PC-9 (cell line): ENCODE measurements at regions of chrX and their contacts with region 1.

Region 1: GRCh38 chrX:4547213-4547836 is 833.9 kb upstream of the PRKX start:
- DNase-seq: peak in 1 of 2 experiments; percentile 35
- H3K4me3 ChIP-seq: no peak overlapping the region
- H3K27ac ChIP-seq: no peak overlapping the region
- H3K4me1 ChIP-seq: no peaks in the 10 kb centered on the region; the same call in 1 of the 2 replicates
- H3K27me3 ChIP-seq: no peaks in the 10 kb centered on the region
- CTCF ChIP-seq: peak; percentile 95

Region 2: DNA sequence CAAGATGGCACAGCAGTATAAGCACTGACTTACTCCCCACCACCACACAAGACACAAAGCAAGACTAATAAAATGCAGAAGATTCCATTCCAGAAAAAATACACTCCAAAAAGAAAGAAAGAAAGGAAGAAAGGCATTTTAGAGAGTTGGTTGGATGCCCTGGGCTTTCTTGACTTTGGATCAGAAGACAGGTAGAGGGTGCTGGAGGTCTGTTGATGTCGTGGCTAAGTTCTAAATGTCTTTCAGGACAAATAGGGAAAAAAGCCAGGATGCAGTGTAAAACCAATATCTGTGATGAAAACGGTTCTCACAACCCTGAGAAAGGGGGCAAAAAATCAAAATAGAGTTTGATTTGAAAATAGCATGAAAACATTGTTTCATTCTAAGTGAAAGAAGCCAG is 278.6 kb before region 1 on chrX:
- CTCF ChIA-PET with region 1: no interaction called
- POLR2A ChIA-PET with region 1: no interaction called
- intact Hi-C with region 1: loop called (anchors 2 kb)
- DNase-seq: no peak
- H3K4me3 ChIP-seq: no peak overlapping the region
- H3K27ac ChIP-seq: no peak overlapping the region
- H3K4me1 ChIP-seq: no peaks in the 10 kb centered on the region
- H3K27me3 ChIP-seq: no peaks in the 10 kb centered on the region
- CTCF ChIP-seq: peak; percentile 59

Region 3: GRCh38 chrX:4572652-4573051 is 25.3 kb after region 1 on chrX:
- CTCF ChIA-PET with region 1: no interaction called
- POLR2A ChIA-PET with region 1: no interaction called
- intact Hi-C with region 1: no loop called
- DNase-seq: no peak
- H3K4me3 ChIP-seq: no peak overlapping the region
- H3K27ac ChIP-seq: no peak overlapping the region
- H3K4me1 ChIP-seq: peaks cover 10% of the 10 kb centered on the region
- H3K27me3 ChIP-seq: no peaks in the 10 kb centered on the region
- CTCF ChIP-seq: no peak

Region 4: GRCh38 chrX:5051831-5052491 is 504.6 kb after region 1 on chrX:
- CTCF ChIA-PET with region 1: no interaction called
- POLR2A ChIA-PET with region 1: no interaction called
- intact Hi-C with region 1: loop called (anchors 5 kb)
- DNase-seq: peak; percentile 76 to 93
- H3K4me3 ChIP-seq: peak overlapping the region; percentile 26; the same call in 1 of the 2 replicates
- H3K27ac ChIP-seq: peak overlapping the region; percentile 96
- H3K4me1 ChIP-seq: peaks cover 27% of the 10 kb centered on the region
- H3K27me3 ChIP-seq: no peaks in the 10 kb centered on the region
- CTCF ChIP-seq: no peak